ENCODE measurements at regions of chr16 and their contacts with region 1.

Region 1: DNA sequence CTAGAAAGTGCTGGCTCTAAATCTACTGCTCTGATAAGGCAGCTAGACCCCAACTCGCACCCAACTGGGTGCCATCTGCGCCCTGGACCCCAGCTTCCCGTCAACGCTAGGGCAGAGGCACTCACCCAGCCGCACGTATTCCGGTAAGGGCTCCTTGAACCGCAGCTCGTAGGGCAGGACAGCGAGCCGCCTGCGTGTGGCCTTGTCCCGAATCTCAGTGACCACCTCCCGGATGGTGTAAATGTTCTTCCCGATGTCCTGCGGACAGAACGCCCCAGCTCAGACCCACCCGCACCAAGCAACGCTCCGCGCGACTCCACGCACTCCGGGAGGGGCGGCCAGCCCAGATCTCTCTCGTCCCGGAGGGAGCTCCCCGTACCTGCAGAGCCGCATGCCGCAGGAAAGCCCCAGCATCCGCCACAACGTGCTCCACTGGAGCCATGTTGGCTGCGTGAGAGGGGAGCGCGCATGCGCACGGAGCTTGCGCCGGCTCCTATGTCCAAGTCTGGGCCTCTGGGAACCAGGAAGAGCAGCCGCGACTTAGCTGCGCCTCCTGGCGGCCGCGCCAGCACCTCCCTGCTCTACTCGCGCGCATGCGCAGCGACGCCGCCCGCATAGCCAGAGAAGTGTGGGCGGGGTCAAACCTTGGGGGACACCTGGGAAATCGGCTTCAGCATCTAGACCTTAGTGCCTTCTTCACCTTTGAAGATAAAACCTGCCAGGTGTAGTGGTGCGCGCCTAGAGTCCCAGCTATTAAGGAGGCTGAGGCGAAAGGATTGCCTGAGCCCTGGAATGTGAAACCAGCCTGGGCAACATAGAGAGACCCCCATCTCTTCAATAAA is at the start of gene NOB1:
- DNase-seq: peak; percentile 92
- ATAC-seq: peak; percentile 97
- H3K4me3 ChIP-seq: peak within 1 kb of the TSS; percentile 93
- H3K27ac ChIP-seq: peak within 1 kb of the TSS; percentile 97
- H3K4me1 ChIP-seq: peaks cover 5% of the 10 kb centered on the region
- H3K27me3 ChIP-seq: no peaks in the 10 kb centered on the region
- CTCF ChIP-seq: peak; percentile 99 to 100 (median 99); a peak in 5 of 6 replicates
- EP300 ChIP-seq: no peak
- POLR2A ChIP-seq: peak; percentile 98
- RAD21 ChIP-seq: peak; percentile 72
- polyA plus RNA-seq, gene NOB1: 31.1 to 44.0 TPM

Region 2: DNA sequence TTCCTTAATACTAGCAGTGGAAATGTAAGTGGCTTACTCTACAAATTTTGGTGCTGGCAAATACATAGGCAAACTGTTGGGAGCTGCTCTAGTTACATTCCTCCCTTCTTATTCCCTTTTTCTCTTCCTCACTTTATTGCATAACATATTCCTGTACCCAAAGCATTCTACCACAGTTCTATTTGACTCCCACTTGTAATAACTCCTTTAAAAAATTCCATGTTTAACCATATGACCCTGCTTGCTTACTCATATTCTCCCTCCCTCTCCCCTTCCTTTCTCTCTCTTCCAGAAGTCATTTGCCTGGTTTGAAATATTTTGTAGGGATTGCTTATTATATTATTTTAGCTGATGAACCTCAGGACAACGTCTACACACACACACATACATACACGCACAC is 51.1 kb before region 1 on chr16:
- CTCF ChIA-PET with region 1: interaction called, 95 read pairs
- POLR2A ChIA-PET with region 1: no interaction called
- RAD21 ChIA-PET with region 1: interaction called, 32 read pairs
- SMC1A ChIA-PET with region 1: interaction called, 34 read pairs
- in situ Hi-C with region 1: no loop called
- intact Hi-C with region 1: no loop called
- DNase-seq: no peak
- ATAC-seq: no peak
- H3K4me3 ChIP-seq: no peak overlapping the region
- H3K27ac ChIP-seq: no peak overlapping the region
- H3K4me1 ChIP-seq: no peaks in the 10 kb centered on the region
- H3K27me3 ChIP-seq: no peaks in the 10 kb centered on the region
- CTCF ChIP-seq: no peak
- EP300 ChIP-seq: no peak
- POLR2A ChIP-seq: no peak
- RAD21 ChIP-seq: no peak

Region 3: GRCh38 chr16:69726296-69727060 is 28.2 kb before region 1 on chr16 and contains the start of gene NQO1:
- CTCF ChIA-PET with region 1: interaction called, 68 read pairs
- POLR2A ChIA-PET with region 1: interaction called, 25 read pairs
- RAD21 ChIA-PET with region 1: interaction called, 18 read pairs
- SMC1A ChIA-PET with region 1: interaction called, 47 read pairs
- in situ Hi-C with region 1: no loop called
- intact Hi-C with region 1: loop called (anchors 2 kb)
- DNase-seq: peak; percentile 81
- ATAC-seq: peak; percentile 99
- H3K4me3 ChIP-seq: peak within 1 kb of the TSS; percentile 78
- H3K27ac ChIP-seq: peak within 1 kb of the TSS; percentile 92
- H3K4me1 ChIP-seq: no peaks in the 10 kb centered on the region; the same call in none of the 2 replicates
- H3K27me3 ChIP-seq: no peaks in the 10 kb centered on the region
- CTCF ChIP-seq: no peak
- EP300 ChIP-seq: no peak
- POLR2A ChIP-seq: peak; percentile 92
- RAD21 ChIP-seq: no peak
- polyA plus RNA-seq, gene NQO1: 35.2 to 40.0 TPM

Region 4: GRCh38 chr16:69767459-69768229 is 13.0 kb after region 1 on chr16:
- CTCF ChIA-PET with region 1: interaction called, 25 read pairs
- POLR2A ChIA-PET with region 1: interaction called, 12 read pairs
- RAD21 ChIA-PET with region 1: interaction called, 16 read pairs
- SMC1A ChIA-PET with region 1: interaction called, 16 read pairs
- in situ Hi-C with region 1: no loop called
- intact Hi-C with region 1: no loop called
- DNase-seq: no peak
- ATAC-seq: peak; percentile 20
- H3K4me3 ChIP-seq: no peak overlapping the region
- H3K27ac ChIP-seq: no peak overlapping the region
- H3K4me1 ChIP-seq: peaks cover 19% of the 10 kb centered on the region
- H3K27me3 ChIP-seq: no peaks in the 10 kb centered on the region
- CTCF ChIP-seq: no peak
- EP300 ChIP-seq: no peak
- POLR2A ChIP-seq: no peak
- RAD21 ChIP-seq: no peak

Region 5: DNA sequence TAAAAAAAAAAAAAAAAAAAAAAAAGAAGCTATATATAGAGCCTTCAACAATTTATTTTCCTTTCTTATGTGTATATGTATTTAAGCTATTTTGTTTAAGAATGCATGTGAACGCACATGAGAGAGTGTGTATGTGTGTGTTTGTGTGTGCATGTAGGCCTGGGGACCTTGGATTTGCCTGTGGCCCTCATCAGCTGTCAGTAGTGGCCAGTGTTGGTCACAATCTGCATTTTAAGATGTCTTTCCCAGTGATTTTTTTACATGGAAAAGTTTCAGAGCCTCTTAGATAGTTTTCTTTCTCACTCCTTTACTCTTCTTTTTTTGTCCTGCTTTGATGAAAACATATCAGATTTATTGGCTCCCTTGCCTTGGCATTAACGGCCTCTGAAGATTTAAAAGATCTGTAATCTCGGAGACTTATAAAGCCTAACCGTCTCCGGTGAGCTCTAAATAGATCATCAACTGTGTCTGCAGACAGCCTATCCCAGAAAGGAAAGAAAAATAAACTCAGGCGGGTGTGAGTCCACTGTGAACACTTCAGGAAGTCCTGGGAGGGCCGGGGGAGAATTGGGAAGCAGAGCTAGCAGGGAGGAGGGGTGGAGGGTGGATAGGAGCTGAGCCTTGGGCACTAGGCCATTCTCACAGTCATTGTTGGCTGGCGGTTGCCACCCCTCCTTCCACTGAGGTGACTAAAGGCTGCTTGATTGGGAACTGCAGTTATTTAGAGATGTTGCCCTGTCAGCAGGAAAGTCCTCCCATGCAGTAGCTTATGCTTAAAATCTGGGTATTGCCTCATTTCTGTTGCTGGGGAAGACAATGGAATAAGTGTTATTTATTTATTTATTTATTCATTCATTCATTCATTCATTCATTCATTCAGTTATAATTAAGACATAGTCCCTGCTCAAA is 94.2 kb after region 1 on chr16:
- CTCF ChIA-PET with region 1: no interaction called
- POLR2A ChIA-PET with region 1: no interaction called
- RAD21 ChIA-PET with region 1: no interaction called
- SMC1A ChIA-PET with region 1: no interaction called
- in situ Hi-C with region 1: no loop called
- intact Hi-C with region 1: no loop called
- DNase-seq: no peak
- ATAC-seq: no peak
- H3K4me3 ChIP-seq: no peak overlapping the region
- H3K27ac ChIP-seq: no peak overlapping the region
- H3K4me1 ChIP-seq: no peaks in the 10 kb centered on the region
- H3K27me3 ChIP-seq: no peaks in the 10 kb centered on the region
- CTCF ChIP-seq: no peak
- EP300 ChIP-seq: no peak
- POLR2A ChIP-seq: no peak
- RAD21 ChIP-seq: no peak